ENCODE measurements at regions of chr5 and their contacts with region 1.

Region 1: GRCh38 chr5:174951146-174951780 is 226.9 kb downstream of the MSX2 start:
- DNase-seq: peak in 1 of 2 donors; percentile 18
- ATAC-seq: peak in 3 of 4 donors; percentile 51 to 78 (median 70)
- H3K4me3 ChIP-seq: no peak overlapping the region
- H3K27ac ChIP-seq: no peak overlapping the region
- H3K4me1 ChIP-seq: no peaks in the 10 kb centered on the region
- H3K27me3 ChIP-seq: no peaks in the 10 kb centered on the region
- CTCF ChIP-seq: peak; percentile 62

Region 2: GRCh38 chr5:175444060-175444904 is 493.0 kb after region 1 on chr5 and contains the start of gene DRD1:
- intact Hi-C with region 1: loop called (anchors 5 kb)
- DNase-seq: peak; percentile 35 to 54
- ATAC-seq: peak; percentile 51 to 76 (median 63)
- H3K4me3 ChIP-seq: peak within 1 kb of the TSS; percentile 54
- H3K27ac ChIP-seq: no peak within 1 kb of the TSS
- H3K4me1 ChIP-seq: peaks cover 3% of the 10 kb centered on the region
- H3K27me3 ChIP-seq: peaks cover 0 to 58% (median 4%) of the 10 kb centered on the region in 3 donors
- CTCF ChIP-seq: peak; percentile 68
- total RNA-seq, gene DRD1: 0.06 TPM in 1 of 4 donors, not detected in the others

Region 3: GRCh38 chr5:175464074-175464941 is 513.0 kb after region 1 on chr5:
- intact Hi-C with region 1: loop called in 1 of 2 experiments (anchors 5 kb)
- DNase-seq: no peak
- ATAC-seq: peak in 3 of 4 donors; percentile 46 to 64 (median 62)
- H3K4me3 ChIP-seq: no peak overlapping the region
- H3K27ac ChIP-seq: no peak overlapping the region
- H3K4me1 ChIP-seq: no peaks in the 10 kb centered on the region
- H3K27me3 ChIP-seq: no peaks in the 10 kb centered on the region
- CTCF ChIP-seq: peak; percentile 48

Measured in psoas muscle (tissue), 8 donors.